Panc1 (cell line): ENCODE measurements at regions of chr11 and their contacts with region 1.

Region 1: DNA sequence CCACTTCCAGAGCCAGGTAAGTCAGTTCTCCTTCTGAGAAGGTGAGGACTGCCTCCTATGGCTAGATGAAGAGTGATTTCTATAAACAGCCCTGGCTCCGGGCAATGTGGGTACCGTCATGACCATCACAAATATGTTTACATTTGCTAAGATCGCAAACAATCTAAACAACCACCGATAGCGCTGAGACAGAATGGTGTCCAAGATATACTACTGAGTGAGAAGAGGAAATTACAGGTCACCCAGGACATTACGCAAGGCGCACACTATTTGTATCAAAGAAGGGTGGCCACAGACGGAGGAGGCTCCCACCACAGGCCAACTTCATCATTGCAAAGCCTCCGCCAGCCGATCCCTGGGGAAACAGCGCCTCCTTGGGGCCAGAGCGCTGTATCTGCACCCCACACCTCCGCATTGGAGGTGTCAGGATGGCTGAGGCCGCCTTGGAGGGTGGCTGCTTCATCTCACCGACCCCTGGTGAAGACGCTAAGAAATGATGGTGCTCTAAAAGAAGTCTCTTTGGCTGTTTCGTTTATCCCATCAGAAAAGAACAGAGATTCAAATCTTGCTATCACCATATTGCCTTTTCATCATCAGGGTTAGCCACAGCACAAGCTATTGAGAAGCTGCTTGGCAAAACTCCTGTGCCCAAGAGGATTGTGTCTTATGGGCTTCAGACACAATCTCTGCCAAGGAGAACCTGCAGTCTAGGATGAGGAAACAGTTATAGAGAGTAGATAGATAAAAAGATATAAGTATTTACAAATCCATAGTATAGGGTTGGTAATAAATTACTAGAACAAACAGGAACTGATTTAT is 12.3 kb upstream of the ASRGL1 start:
- DNase-seq: no peak
- ATAC-seq: peak; percentile 96
- H3K4me3 ChIP-seq: no peak overlapping the region
- H3K27ac ChIP-seq: no peak overlapping the region
- H3K4me1 ChIP-seq: no peaks in the 10 kb centered on the region
- H3K27me3 ChIP-seq: no peaks in the 10 kb centered on the region
- CTCF ChIP-seq: peak; percentile 92

Region 2: DNA sequence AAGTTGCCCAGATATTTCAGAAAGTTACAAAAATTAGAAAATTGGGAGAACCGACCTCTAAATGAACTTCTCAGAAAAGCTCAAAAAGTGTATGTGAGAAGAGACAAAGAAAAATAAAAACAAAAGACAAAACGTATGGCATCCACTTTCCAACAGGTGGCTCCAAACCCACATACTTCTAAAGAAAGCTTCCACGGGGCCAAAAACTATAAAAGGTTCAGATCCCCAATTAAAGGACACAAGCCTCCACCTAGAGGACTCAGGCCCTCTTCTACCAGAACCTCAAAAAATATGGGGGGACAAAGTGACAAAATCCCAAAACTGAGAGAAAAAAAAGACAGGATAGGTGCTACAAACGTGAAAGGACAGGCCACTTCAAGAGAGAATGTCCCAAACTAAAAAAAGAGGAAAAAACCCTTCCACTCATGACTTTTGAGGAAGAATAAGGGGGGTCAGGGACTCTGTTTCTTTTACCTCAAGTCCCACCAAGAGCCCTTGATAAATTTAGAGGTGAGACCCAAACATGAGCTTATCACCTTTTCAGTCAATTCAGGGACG is 107.7 kb before region 1 on chr11:
- CTCF ChIA-PET with region 1: no interaction called
- POLR2A ChIA-PET with region 1: no interaction called
- in situ Hi-C with region 1: no loop called
- intact Hi-C with region 1: loop called (anchors 5 kb)
- DNase-seq: no peak
- ATAC-seq: no peak
- H3K4me3 ChIP-seq: no peak overlapping the region
- H3K27ac ChIP-seq: no peak overlapping the region
- H3K4me1 ChIP-seq: no peaks in the 10 kb centered on the region
- H3K27me3 ChIP-seq: no peaks in the 10 kb centered on the region
- CTCF ChIP-seq: peak; percentile 73

Region 3: GRCh38 chr11:62337303-62338181 is 12.6 kb after region 1 on chr11 and contains the start of gene ASRGL1:
- CTCF ChIA-PET with region 1: interaction called, 6 read pairs
- POLR2A ChIA-PET with region 1: interaction called, 15 read pairs
- in situ Hi-C with region 1: no loop called
- intact Hi-C with region 1: no loop called
- DNase-seq: no peak
- ATAC-seq: peak; percentile 98
- H3K4me3 ChIP-seq: peak within 1 kb of the TSS; percentile 68 to 79
- H3K27ac ChIP-seq: peak within 1 kb of the TSS; percentile 73
- H3K4me1 ChIP-seq: no peaks in the 10 kb centered on the region
- H3K27me3 ChIP-seq: no peaks in the 10 kb centered on the region; the same call in 1 of the 2 replicates
- CTCF ChIP-seq: no peak
- total RNA-seq, gene ASRGL1: 43.2 TPM